Aorta (tissue), 5 donors: ENCODE measurements at regions of chr6 and their contacts with region 1.

Region 1: DNA sequence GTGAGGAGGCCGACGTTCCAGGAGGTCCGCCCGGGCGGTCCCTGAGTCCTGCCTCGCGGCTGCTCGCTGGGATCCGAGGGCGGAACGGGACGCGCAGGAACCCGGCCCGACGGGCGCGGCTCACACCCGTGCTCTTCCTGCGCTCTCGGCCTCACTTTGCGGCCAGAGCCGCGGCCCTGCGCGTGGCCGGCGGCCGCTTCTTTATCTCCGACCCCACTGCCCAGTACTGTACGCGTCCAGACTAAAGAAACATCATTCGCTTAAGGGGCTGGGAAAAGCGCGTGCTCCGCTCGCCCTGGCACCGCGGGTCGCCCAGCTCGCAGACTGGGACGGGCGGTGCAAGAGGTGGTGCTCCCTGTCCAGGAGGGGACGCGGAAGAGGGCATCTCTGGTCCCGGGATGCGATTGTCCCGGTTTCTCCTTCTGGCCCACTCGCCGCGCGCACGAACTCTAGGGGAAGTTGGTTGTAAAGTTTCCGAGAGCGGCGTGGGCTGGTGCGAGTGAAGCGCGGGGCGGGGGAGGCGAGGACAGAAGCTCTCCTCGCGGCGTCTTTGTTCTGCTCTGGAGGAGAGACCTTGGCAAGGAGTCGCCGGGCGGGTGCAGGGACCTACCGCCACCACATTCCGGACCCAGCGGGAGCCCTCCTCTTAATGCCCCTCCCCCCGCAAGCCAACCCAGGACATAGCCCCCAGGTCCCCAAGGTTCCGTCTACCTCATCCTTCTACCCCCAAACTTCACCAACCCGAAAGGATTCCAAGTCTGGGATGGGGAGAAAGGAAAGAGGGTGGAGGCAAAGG is 71.0 kb downstream of the SOX4 start:
- DNase-seq: peak; percentile 56 to 80
- ATAC-seq: peak; percentile 55
- H3K4me3 ChIP-seq: peak overlapping the region; percentile 4 to 73
- H3K27ac ChIP-seq: no peak overlapping the region
- H3K4me1 ChIP-seq: no peaks in the 10 kb centered on the region
- H3K27me3 ChIP-seq: no peaks in the 10 kb centered on the region

Region 2: GRCh38 chr6:21507811-21508210 is 156.7 kb before region 1 on chr6:
- intact Hi-C with region 1: no loop called
- DNase-seq: no peak
- ATAC-seq: no peak
- H3K4me3 ChIP-seq: no peak overlapping the region
- H3K27ac ChIP-seq: no peak overlapping the region
- H3K4me1 ChIP-seq: no peaks in the 10 kb centered on the region
- H3K27me3 ChIP-seq: no peaks in the 10 kb centered on the region

Region 3: DNA sequence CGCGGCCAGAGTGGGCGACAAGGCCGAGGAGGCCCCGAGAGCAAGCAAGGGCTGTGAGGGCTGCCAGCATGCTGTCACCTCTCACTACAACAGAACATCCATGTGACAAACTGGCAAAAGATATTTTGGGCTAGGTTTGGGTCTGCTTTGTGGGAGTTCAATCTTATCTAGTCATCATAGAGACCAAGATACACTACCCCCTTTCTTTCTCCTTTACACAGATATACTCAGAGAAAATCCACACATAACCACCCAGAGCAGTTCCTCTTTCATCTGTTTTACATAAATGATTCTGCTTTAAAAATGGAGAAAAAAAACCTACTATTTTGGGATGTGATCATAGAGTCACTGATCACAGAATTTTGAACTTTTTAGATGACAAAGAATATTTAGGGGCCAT is 54.2 kb before region 1 on chr6:
- intact Hi-C with region 1: no loop called
- DNase-seq: no peak
- ATAC-seq: no peak
- H3K4me3 ChIP-seq: no peak overlapping the region
- H3K27ac ChIP-seq: no peak overlapping the region
- H3K4me1 ChIP-seq: no peaks in the 10 kb centered on the region
- H3K27me3 ChIP-seq: no peaks in the 10 kb centered on the region

Region 4: GRCh38 chr6:22135395-22135794 is 470.9 kb after region 1 on chr6:
- intact Hi-C with region 1: loop called in 1 of 2 experiments (anchors 5 kb)
- DNase-seq: no peak
- ATAC-seq: no peak
- H3K4me3 ChIP-seq: no peak overlapping the region
- H3K27ac ChIP-seq: no peak overlapping the region
- H3K4me1 ChIP-seq: no peaks in the 10 kb centered on the region
- H3K27me3 ChIP-seq: no peaks in the 10 kb centered on the region